CD14-positive monocyte (primary cell): ENCODE measurements at regions of chr10 and their contacts with region 1.

Region 1: DNA sequence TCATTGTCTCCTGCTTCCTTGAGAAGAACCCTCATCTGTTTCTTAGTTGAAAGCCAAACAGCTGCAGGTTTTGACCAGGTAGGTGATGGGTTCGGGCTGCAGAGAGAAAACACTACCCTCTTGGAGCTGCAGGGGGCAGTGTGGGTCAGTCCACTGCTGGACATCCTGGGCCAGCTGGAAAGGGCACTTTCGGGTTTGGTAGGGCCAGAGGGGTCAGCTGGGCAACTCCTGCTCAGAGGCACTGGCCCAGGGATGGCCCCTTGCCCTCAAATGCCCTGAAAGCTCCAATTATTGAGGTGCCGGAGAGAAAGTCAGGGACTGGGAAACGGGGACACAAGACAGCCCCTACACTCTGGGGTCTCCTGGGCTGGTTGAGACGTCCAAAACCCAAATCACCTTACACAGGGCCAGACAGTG is 90.7 kb downstream of the MKI67 start:
- DNase-seq: peak; percentile 55 to 69 (median 66)
- H3K4me3 ChIP-seq: no peak overlapping the region
- H3K4me3 Mint-ChIP-seq: no peak overlapping the region
- H3K27ac ChIP-seq: no peak overlapping the region
- H3K27ac Mint-ChIP-seq: peak overlapping the region in 4 of 7 donors; percentile 56 to 76 (median 67)
- H3K4me1 ChIP-seq: peaks cover 0 to 6% of the 10 kb centered on the region in 2 donors
- H3K4me1 Mint-ChIP-seq: peaks cover 16% of the 10 kb centered on the region
- H3K27me3 ChIP-seq: no peaks in the 10 kb centered on the region
- H3K27me3 Mint-ChIP-seq: peaks cover 0 to 5% (median 0%) of the 10 kb centered on the region in 3 donors
- CTCF ChIP-seq: peak; percentile 95

Region 2: GRCh38 chr10:128069351-128070051 is 33.9 kb after region 1 on chr10:
- intact Hi-C with region 1: loop called (anchors 1 to 2 kb)
- DNase-seq: peak; percentile 77 to 81 (median 80)
- H3K4me3 ChIP-seq: no peak overlapping the region
- H3K4me3 Mint-ChIP-seq: no peak overlapping the region
- H3K27ac ChIP-seq: peak overlapping the region in 1 of 2 donors; percentile 33
- H3K27ac Mint-ChIP-seq: peak overlapping the region; percentile 64 to 92 (median 83)
- H3K4me1 ChIP-seq: peaks cover 17 to 29% of the 10 kb centered on the region in 2 donors
- H3K4me1 Mint-ChIP-seq: peaks cover 31% of the 10 kb centered on the region
- H3K27me3 ChIP-seq: no peaks in the 10 kb centered on the region
- H3K27me3 Mint-ChIP-seq: peaks cover 0 to 5% (median 3%) of the 10 kb centered on the region in 3 donors
- CTCF ChIP-seq: peak; percentile 84

Region 3: DNA sequence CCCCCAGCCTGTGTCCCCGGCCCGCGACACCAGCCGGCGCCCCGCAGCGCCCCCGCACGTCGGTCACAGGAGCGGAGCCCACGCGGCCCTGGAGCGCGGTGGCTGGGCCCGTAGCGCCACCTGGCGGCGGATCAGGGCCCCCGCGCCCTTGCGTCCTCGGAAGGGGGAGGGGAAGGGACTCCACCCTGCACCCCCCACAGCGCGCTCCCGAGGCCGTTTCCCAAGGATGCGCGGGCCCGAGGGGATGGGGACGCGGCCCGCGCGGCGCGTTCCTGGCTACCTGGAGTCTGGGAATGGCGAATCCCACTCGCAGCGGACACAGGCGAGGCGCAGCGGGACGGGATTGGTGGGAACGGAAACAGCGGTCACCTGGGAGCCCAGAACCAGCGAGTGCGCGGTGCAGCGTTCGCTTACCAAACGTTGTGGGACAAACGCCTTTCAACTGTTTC is 114.5 kb after region 1 on chr10:
- intact Hi-C with region 1: loop called (anchors 5 kb)
- DNase-seq: peak; percentile 71 to 80 (median 74)
- H3K4me3 ChIP-seq: peak overlapping the region; percentile 50 to 80 (median 51)
- H3K4me3 Mint-ChIP-seq: peak overlapping the region; percentile 66 to 71
- H3K27ac ChIP-seq: no peak overlapping the region
- H3K27ac Mint-ChIP-seq: no peak overlapping the region
- H3K4me1 ChIP-seq: peaks cover 5 to 13% of the 10 kb centered on the region in 2 donors
- H3K4me1 Mint-ChIP-seq: peaks cover 2% of the 10 kb centered on the region
- H3K27me3 ChIP-seq: peaks cover 0 to 6% of the 10 kb centered on the region in 2 donors
- H3K27me3 Mint-ChIP-seq: peaks cover 13 to 33% (median 30%) of the 10 kb centered on the region in 3 donors
- CTCF ChIP-seq: peak; percentile 89